K562 (cell line): ENCODE measurements at regions of chr1 and their contacts with region 1.

Region 1: GRCh38 chr1:231091831-231092301 is 51.8 kb upstream of the FAM89A start:
- DNase-seq: peak; percentile 67 to 89 (median 72)
- ATAC-seq: peak; percentile 97
- H3K4me3 ChIP-seq: no peak overlapping the region
- H3K27ac ChIP-seq: no peak overlapping the region
- H3K4me1 ChIP-seq: peaks cover 0 to 5% of the 10 kb centered on the region in 2 experiments; a peak in 4 of 5 replicates
- H3K27me3 ChIP-seq: peaks cover 11 to 18% of the 10 kb centered on the region in 2 experiments; a peak in 4 of 5 replicates
- CTCF ChIP-seq: peak; percentile 94 to 99 (median 97)
- EP300 ChIP-seq: no peak
- POLR2A ChIP-seq: no peak
- RAD21 ChIP-seq: peak; percentile 89 to 97

Region 2: GRCh38 chr1:230365723-230366307 is 726.1 kb before region 1 on chr1:
- CTCF ChIA-PET with region 1: no interaction called
- POLR2A ChIA-PET with region 1: no interaction called
- in situ Hi-C with region 1: no loop called
- intact Hi-C with region 1: no loop called
- DNase-seq: no peak
- ATAC-seq: peak; percentile 44; the same call in 2 of the 3 replicates
- H3K4me3 ChIP-seq: no peak overlapping the region
- H3K27ac ChIP-seq: no peak overlapping the region
- H3K4me1 ChIP-seq: no peaks in the 10 kb centered on the region
- H3K27me3 ChIP-seq: peaks cover 31 to 82% of the 10 kb centered on the region in 2 experiments
- CTCF ChIP-seq: 0 out of 6 replicates have a peak, but pooled peaks of 1 of the 3 experiments have one; percentile 21
- EP300 ChIP-seq: no peak
- POLR2A ChIP-seq: no peak
- RAD21 ChIP-seq: 0 out of 4 replicates have a peak, but pooled peaks of 1 of the 2 experiments have one; percentile 25

Region 3: GRCh38 chr1:230978491-230979388 is 113.1 kb before region 1 on chr1 and contains the starts of genes ARV1 and TTC13:
- CTCF ChIA-PET with region 1: no interaction called
- POLR2A ChIA-PET with region 1: interaction called, 3 read pairs
- in situ Hi-C with region 1: no loop called
- intact Hi-C with region 1: loop called (anchors 5 kb)
- DNase-seq: peak; percentile 99 to 100 (median 99)
- ATAC-seq: peak; percentile 99
- H3K4me3 ChIP-seq: peak within 1 kb of the TSS; percentile 62
- H3K27ac ChIP-seq: peak within 1 kb of the TSS; percentile 75
- H3K4me1 ChIP-seq: peaks cover 21 to 40% of the 10 kb centered on the region in 2 experiments; a peak in 4 of 5 replicates
- H3K27me3 ChIP-seq: no peaks in the 10 kb centered on the region
- CTCF ChIP-seq: peak; percentile 38 to 53 (median 52); a peak in 5 of 6 replicates
- EP300 ChIP-seq: peak; percentile 33; the same call in 1 of the 2 replicates
- POLR2A ChIP-seq: peak; percentile 97
- RAD21 ChIP-seq: peak; percentile 21 to 41; a peak in 3 of 4 replicates
- polyA plus RNA-seq, gene ARV1: 61.9 to 71.0 TPM
- polyA plus RNA-seq, gene TTC13: 1.7 to 2.2 TPM

Region 4: DNA sequence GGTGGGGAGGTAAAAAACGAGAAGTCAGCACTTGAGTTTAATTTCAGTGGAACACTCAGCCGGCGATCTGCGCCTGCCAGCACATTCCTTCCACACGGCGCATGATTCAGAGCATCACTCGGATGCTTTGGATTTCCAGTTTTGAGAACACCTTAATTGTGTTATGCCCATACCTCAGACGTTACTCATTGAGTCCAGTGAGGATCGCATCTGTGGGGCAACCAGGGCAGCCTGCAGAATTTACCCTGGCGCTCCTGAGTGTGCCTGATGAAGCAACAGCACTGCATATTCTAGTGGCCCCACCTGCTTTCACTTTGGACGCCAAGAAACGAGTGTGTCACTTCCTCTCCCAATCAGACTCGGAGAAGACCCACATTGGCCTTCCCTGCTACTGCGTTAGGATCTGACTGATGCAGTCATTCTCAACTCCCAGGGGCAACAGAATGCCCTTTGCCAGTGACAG is 71.7 kb before region 1 on chr1:
- CTCF ChIA-PET with region 1: interaction called, 5 read pairs
- POLR2A ChIA-PET with region 1: interaction called, 3 read pairs
- in situ Hi-C with region 1: no loop called
- intact Hi-C with region 1: loop called (anchors 5 kb)
- DNase-seq: no peak
- ATAC-seq: no peak
- H3K4me3 ChIP-seq: no peak overlapping the region
- H3K27ac ChIP-seq: no peak overlapping the region
- H3K4me1 ChIP-seq: no peaks in the 10 kb centered on the region; a peak in 1 of 5 replicates
- H3K27me3 ChIP-seq: no peaks in the 10 kb centered on the region
- CTCF ChIP-seq: no peak
- EP300 ChIP-seq: no peak
- POLR2A ChIP-seq: no peak
- RAD21 ChIP-seq: no peak

Region 5: DNA sequence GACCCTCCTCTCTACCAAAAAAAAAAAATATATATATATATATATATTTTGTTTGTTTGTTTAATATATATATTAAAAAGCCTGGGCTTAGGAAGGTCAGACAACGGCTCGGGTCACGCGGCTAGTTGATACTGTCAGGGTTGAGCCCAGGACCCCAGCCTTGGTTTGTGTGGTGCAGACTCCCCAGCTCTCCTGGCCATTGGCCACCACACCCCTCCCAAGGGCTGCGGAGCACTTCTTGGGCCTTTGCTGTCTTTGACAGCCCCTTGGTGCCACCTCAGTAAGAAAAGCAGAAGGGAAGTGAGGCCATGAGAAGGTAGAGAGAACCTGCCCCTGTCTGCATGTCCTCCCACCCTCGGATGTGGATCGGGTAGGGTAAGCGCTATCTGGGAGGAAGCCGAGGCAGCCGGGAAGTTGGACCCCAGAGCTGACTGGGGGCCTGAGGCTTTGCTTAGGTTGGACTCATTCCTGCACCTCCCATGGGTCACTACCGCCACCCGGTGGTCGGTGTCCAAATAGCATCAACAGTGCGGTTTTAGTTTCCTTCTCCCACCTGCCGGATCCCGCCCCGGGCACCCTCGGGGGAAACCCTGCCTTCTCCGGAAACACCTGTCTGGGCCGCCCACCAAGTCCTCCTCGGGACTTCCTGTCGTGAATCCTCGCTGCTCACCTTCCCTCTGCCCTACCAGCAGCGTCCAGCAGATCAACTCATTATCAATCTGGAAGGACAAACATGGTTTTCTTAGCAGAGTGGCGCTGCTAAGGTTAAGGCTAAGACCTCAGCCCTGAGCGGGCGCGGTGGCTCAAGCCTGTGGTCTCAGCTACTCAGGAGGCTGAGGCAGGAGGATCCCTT is 119.4 kb after region 1 on chr1:
- CTCF ChIA-PET with region 1: interaction called, 14 read pairs
- POLR2A ChIA-PET with region 1: interaction called, 6 read pairs
- in situ Hi-C with region 1: no loop called
- intact Hi-C with region 1: loop called (anchors 2 kb)
- DNase-seq: peak; percentile 86 to 92 (median 90)
- ATAC-seq: peak; percentile 93
- H3K4me3 ChIP-seq: peak overlapping the region; percentile 32
- H3K27ac ChIP-seq: no peak overlapping the region
- H3K4me1 ChIP-seq: peaks cover 0 to 17% of the 10 kb centered on the region in 2 experiments; a peak in 3 of 5 replicates
- H3K27me3 ChIP-seq: peaks cover 10 to 18% of the 10 kb centered on the region in 2 experiments; a peak in 3 of 5 replicates
- CTCF ChIP-seq: peak; percentile 94 to 98 (median 98)
- EP300 ChIP-seq: no peak
- POLR2A ChIP-seq: no peak
- RAD21 ChIP-seq: peak; percentile 99